Endothelial cell of umbilical vein (primary cell): ENCODE measurements at regions of chr19 and their contacts with region 1.

Region 1: DNA sequence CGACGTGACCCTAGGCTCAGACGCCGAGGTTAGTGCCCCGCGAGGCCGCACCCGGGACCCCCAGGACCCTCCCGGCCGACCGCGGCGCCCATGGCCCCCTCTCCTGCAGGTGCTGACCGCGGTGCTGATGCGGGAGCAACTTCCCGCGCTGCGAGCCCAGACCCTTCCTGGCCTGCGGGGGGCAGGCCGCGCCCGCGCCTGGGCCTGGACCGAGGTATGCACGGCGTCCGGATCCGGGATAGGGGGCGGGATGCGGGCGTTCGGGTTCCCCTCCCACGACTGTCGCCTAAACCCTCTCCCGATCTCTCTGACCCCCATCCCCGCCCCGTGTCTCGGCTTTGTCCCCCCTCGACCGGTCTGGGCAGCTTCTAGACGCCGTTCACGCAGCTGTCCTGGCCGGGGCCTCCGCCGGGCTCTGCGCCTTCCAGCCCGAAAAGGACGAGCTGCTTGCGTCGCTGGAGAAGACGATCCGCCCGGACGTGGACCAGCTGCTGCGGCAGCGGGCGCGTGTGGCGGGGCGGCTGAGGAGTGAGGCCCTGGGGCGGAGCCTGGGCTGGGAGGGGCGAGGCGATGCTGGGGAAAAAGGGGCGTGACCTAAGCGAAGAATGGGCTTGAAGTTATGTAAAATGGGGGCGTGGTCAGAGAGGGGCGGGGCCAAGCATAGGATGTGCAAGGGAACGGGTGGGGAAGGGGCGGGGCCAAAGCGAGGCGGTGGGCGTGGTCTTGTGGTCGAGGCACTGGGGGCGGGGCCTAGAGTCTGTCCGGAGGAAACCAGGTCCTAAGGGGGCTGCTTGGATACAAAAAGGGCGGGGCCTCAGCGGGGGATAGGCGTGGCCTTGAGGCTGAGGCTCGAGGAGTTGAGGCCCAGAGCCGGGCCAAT is 16.0 kb upstream of the COLGALT1 start:
- DNase-seq: peak; percentile 93
- H3K4me3 ChIP-seq: peak overlapping the region in 2 of 3 experiments; percentile 6 to 38
- H3K27ac ChIP-seq: no peak overlapping the region
- H3K4me1 ChIP-seq: peaks cover 7% of the 10 kb centered on the region
- H3K27me3 ChIP-seq: no peaks in the 10 kb centered on the region
- CTCF ChIP-seq: peak in 1 of 2 donors; percentile 67
- POLR2A ChIP-seq: no peak

Region 2: GRCh38 chr19:17201913-17202648 is 337.4 kb before region 1 on chr19:
- CTCF ChIA-PET with region 1: no interaction called
- POLR2A ChIA-PET with region 1: no interaction called
- dilution Hi-C with region 1: no loop called
- intact Hi-C with region 1: no loop called
- DNase-seq: peak; percentile 22
- H3K4me3 ChIP-seq: no peak overlapping the region
- H3K27ac ChIP-seq: no peak overlapping the region
- H3K4me1 ChIP-seq: no peaks in the 10 kb centered on the region
- H3K27me3 ChIP-seq: no peaks in the 10 kb centered on the region
- CTCF ChIP-seq: no peak
- POLR2A ChIP-seq: no peak

Region 3: GRCh38 chr19:17441241-17442021 is 98.0 kb before region 1 on chr19:
- CTCF ChIA-PET with region 1: no interaction called
- POLR2A ChIA-PET with region 1: no interaction called
- dilution Hi-C with region 1: no loop called
- intact Hi-C with region 1: no loop called
- DNase-seq: peak; percentile 28
- H3K4me3 ChIP-seq: no peak overlapping the region
- H3K27ac ChIP-seq: no peak overlapping the region
- H3K4me1 ChIP-seq: no peaks in the 10 kb centered on the region
- H3K27me3 ChIP-seq: peaks cover 2 to 3% of the 10 kb centered on the region in 2 experiments
- CTCF ChIP-seq: peak; percentile 37 to 57
- POLR2A ChIP-seq: no peak

Region 4: DNA sequence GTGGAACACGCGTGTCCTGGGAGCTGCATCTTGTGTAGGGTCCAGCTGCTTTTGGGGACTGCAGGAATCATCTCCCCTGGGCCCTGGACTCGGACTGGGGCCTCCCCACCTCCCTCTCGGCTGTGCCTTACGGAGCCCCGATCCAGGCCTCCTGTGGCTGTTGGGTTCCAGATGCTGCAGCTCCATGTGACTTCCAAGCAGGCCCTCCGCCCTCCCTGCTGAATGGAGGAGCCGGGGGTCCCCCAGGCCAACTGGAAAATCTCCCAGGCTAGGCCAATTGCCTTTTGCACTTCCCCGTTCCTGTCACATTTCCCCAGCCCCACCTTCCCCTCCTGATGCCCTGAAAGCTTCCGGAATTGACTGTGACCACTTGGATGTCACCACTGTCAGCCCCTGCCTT is 34.3 kb before region 1 on chr19:
- CTCF ChIA-PET with region 1: no interaction called
- POLR2A ChIA-PET with region 1: no interaction called
- dilution Hi-C with region 1: no loop called
- intact Hi-C with region 1: no loop called
- DNase-seq: no peak
- H3K4me3 ChIP-seq: no peak overlapping the region
- H3K27ac ChIP-seq: no peak overlapping the region
- H3K4me1 ChIP-seq: peaks cover 9% of the 10 kb centered on the region
- H3K27me3 ChIP-seq: no peaks in the 10 kb centered on the region
- CTCF ChIP-seq: no peak
- POLR2A ChIP-seq: no peak

Region 5: GRCh38 chr19:17522988-17523872 is 16.2 kb before region 1 on chr19:
- CTCF ChIA-PET with region 1: no interaction called
- POLR2A ChIA-PET with region 1: no interaction called
- dilution Hi-C with region 1: no loop called
- intact Hi-C with region 1: no loop called
- DNase-seq: no peak
- H3K4me3 ChIP-seq: no peak overlapping the region
- H3K27ac ChIP-seq: no peak overlapping the region
- H3K4me1 ChIP-seq: peaks cover 8% of the 10 kb centered on the region
- H3K27me3 ChIP-seq: no peaks in the 10 kb centered on the region
- CTCF ChIP-seq: no peak
- POLR2A ChIP-seq: no peak

Region 6: GRCh38 chr19:17572640-17573039 is 33.2 kb after region 1 on chr19:
- CTCF ChIA-PET with region 1: interaction called, 25 read pairs
- POLR2A ChIA-PET with region 1: no interaction called
- dilution Hi-C with region 1: no loop called
- intact Hi-C with region 1: loop called (anchors 1 kb)
- DNase-seq: no peak
- H3K4me3 ChIP-seq: no peak overlapping the region
- H3K27ac ChIP-seq: no peak overlapping the region
- H3K4me1 ChIP-seq: no peaks in the 10 kb centered on the region
- H3K27me3 ChIP-seq: no peaks in the 10 kb centered on the region
- CTCF ChIP-seq: no peak
- POLR2A ChIP-seq: no peak

Region 7: DNA sequence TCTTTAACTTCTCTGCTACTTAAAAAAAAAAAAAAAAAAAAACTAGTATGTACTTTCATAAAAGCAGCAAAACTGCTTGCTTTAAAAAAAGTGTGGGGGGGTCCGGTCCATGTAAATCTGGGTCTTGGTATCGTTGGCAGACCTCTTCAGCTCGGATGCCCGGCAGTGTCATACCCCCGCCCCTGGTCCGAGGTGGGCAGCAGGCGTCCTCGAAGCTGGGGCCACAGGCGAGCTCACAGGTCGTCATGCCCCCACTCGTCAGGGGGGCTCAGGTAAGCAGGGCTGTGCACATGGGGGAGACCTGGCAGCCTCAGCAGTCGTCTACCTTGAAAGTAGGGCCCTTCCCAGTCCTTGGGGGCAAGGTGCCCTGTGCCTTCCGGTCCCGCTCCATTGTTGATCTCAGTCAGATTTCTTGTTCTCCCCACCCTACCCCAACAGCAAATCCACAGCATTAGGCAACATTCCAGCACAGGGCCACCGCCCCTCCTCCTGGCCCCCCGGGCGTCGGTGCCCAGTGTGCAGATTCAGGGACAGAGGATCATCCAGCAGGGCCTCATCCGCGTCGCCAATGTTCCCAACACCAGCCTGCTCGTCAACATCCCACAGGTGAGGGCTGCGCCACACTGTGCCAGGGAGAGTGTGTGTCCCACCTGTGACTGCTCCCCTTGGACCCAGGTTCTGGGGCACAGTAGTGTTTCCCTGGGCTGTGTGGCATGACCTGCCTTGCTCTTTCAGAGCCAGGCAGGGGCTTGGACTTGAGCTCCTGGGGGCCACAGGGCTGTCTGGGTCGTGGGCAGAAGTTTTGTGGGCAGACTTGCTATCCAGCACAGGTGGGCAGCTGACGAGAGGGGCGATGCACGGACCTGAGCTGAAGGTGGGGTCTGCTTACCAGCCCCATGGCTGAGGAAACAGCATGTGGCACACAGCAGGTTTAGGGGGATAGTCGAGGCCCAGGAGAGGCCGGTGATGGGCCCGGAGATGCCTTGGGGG is 1956.4 kb after region 1 on chr19:
- CTCF ChIA-PET with region 1: no interaction called
- POLR2A ChIA-PET with region 1: interaction called, 15 read pairs
- dilution Hi-C with region 1: no loop called
- intact Hi-C with region 1: no loop called
- DNase-seq: no peak
- H3K4me3 ChIP-seq: no peak overlapping the region
- H3K27ac ChIP-seq: no peak overlapping the region
- H3K4me1 ChIP-seq: no peaks in the 10 kb centered on the region
- H3K27me3 ChIP-seq: no peaks in the 10 kb centered on the region
- CTCF ChIP-seq: no peak
- POLR2A ChIP-seq: no peak